ENCODE measurements at regions of chr1 and their contacts with region 1.

Region 1: GRCh38 chr1:160428655-160429054 is 28.3 kb downstream of the VANGL2 start:
- DNase-seq: peak; percentile 47
- CTCF ChIP-seq: peak; percentile 53

Region 2: DNA sequence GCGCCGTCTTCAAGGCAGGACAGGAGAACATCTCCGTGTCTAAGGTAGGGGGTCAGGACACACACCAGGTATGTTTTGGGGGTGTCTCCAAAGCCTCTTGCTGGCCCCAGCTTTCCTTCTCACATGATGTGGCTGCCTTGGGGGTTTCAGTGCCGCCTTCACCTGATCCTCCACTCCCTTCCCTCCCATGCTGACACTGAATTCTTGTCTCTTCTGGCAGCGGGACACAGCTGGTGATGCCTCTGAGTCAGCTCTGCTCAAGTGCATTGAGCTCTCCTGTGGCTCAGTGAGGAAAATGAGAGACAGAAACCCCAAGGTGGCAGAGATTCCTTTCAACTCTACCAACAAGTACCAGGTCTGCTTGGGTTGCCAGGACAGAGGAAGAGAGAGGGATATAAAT is 299.6 kb before region 1 on chr1:
- CTCF ChIA-PET with region 1: no interaction called
- POLR2A ChIA-PET with region 1: no interaction called
- DNase-seq: no peak
- CTCF ChIP-seq: no peak

Region 3: GRCh38 chr1:160416369-160416768 is 12.3 kb before region 1 on chr1:
- CTCF ChIA-PET with region 1: interaction called, 11 read pairs
- POLR2A ChIA-PET with region 1: no interaction called
- DNase-seq: no peak
- CTCF ChIP-seq: peak; percentile 40

Region 4: DNA sequence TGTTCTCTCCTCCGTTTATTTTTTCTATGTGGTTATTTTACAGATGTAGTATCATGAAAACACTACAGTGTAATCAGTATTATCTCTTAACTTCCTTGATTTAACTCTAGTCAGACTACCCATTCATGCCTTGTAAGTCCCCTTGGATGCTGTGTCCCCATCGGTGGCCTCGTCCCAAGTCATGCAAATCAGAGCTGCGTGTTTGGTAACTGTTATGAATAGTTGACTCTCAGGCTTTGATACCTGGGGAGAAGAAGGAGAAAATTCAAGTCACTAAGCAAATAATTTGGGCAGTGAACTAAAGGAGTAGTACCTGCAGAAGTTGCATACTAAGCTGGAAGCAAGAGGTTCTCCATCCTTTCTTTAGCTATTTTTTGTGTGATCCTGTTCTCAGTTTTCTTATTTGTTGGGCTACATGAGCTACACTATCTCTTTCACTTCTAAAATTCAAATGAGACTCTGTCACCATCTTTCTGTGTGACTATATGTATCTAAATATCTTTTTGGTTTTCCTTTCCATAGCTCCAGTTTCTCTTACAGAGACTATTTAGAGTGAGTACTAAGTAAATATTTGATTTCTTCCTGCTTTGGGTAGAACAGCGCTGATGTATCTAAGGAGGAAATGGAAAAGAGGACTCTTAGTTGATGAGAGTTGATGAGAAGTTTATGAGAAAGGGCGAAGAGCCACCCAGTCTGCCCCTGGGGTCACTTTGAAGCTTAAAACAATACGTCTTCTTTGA is 22.6 kb after region 1 on chr1:
- CTCF ChIA-PET with region 1: interaction called, 15 read pairs
- POLR2A ChIA-PET with region 1: interaction called, 5 read pairs
- DNase-seq: no peak
- CTCF ChIP-seq: no peak

Region 5: GRCh38 chr1:160550572-160551034 is 121.9 kb after region 1 on chr1:
- CTCF ChIA-PET with region 1: interaction called, 13 read pairs
- POLR2A ChIA-PET with region 1: interaction called, 3 read pairs
- DNase-seq: no peak
- CTCF ChIP-seq: peak; percentile 34